Activated CD4-positive, alpha-beta T cell treated with anti-CD3 and anti-CD28 coated beads, Interleukin-2, amount 10 ng/mL, durations not matched to agents 24 days and 14 days (primary cell): ENCODE measurements at regions of chr9 and their contacts with region 1.

Region 1: DNA sequence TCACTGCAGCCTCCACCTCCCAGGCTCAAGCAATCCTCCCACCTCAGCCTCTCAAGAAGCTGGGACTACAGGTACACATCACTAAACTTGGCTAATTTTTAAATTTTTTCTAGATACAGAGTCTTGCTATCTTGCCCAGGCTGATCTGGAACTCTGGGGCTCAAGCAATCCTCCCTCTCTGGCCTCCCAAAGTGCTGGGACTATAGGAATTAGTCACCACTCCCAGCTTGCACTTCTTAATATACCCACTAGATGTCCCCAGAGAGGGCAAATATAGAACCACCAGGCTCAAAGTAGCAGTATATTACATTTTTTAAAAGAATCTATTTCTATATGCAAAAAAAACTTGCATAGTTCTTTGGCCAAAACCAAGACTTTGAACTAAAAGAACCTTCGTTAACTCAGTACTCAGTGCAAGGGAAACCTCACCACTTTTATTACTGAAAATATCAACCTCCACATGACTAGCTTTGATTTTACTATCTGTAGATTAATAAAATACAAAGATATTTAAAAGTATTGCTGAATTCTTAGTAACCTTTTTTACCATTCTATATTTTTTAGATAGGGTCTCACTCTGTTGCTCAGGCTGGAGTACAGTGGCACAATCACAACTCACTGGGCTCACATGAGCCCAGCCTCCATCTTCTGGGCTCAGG is 25.8 kb upstream of the HSD17B3 start:
- DNase-seq: peak; percentile 86
- H3K4me3 Mint-ChIP-seq: no peak overlapping the region
- H3K27ac Mint-ChIP-seq: no peak overlapping the region
- H3K4me1 Mint-ChIP-seq: no peaks in the 10 kb centered on the region
- H3K27me3 Mint-ChIP-seq: peaks cover 2% of the 10 kb centered on the region

Region 2: GRCh38 chr9:96245399-96245798 is 82.4 kb before region 1 on chr9:
- intact Hi-C with region 1: no loop called
- DNase-seq: no peak
- H3K4me3 Mint-ChIP-seq: no peak overlapping the region
- H3K27ac Mint-ChIP-seq: no peak overlapping the region
- H3K4me1 Mint-ChIP-seq: peaks cover 13% of the 10 kb centered on the region
- H3K27me3 Mint-ChIP-seq: peaks cover 42% of the 10 kb centered on the region

Region 3: GRCh38 chr9:96532173-96532572 is 204.3 kb after region 1 on chr9:
- intact Hi-C with region 1: no loop called
- DNase-seq: no peak
- H3K4me3 Mint-ChIP-seq: no peak overlapping the region
- H3K27ac Mint-ChIP-seq: no peak overlapping the region
- H3K4me1 Mint-ChIP-seq: no peaks in the 10 kb centered on the region
- H3K27me3 Mint-ChIP-seq: no peaks in the 10 kb centered on the region

Region 4: GRCh38 chr9:96654443-96655197 is 326.8 kb after region 1 on chr9:
- intact Hi-C with region 1: loop called (anchors 1 kb)
- DNase-seq: peak; percentile 88
- H3K4me3 Mint-ChIP-seq: peak overlapping the region; percentile 89
- H3K27ac Mint-ChIP-seq: peak overlapping the region; percentile 88
- H3K4me1 Mint-ChIP-seq: peaks cover 12% of the 10 kb centered on the region
- H3K27me3 Mint-ChIP-seq: peaks cover 10% of the 10 kb centered on the region

Region 5: GRCh38 chr9:96667361-96667728 is 339.5 kb after region 1 on chr9:
- intact Hi-C with region 1: loop called (anchors 1 kb)
- DNase-seq: no peak
- H3K4me3 Mint-ChIP-seq: no peak overlapping the region
- H3K27ac Mint-ChIP-seq: no peak overlapping the region
- H3K4me1 Mint-ChIP-seq: peaks cover 2% of the 10 kb centered on the region
- H3K27me3 Mint-ChIP-seq: peaks cover 5% of the 10 kb centered on the region